ENCODE measurements at regions of chr6 and their contacts with region 1.

Region 1: DNA sequence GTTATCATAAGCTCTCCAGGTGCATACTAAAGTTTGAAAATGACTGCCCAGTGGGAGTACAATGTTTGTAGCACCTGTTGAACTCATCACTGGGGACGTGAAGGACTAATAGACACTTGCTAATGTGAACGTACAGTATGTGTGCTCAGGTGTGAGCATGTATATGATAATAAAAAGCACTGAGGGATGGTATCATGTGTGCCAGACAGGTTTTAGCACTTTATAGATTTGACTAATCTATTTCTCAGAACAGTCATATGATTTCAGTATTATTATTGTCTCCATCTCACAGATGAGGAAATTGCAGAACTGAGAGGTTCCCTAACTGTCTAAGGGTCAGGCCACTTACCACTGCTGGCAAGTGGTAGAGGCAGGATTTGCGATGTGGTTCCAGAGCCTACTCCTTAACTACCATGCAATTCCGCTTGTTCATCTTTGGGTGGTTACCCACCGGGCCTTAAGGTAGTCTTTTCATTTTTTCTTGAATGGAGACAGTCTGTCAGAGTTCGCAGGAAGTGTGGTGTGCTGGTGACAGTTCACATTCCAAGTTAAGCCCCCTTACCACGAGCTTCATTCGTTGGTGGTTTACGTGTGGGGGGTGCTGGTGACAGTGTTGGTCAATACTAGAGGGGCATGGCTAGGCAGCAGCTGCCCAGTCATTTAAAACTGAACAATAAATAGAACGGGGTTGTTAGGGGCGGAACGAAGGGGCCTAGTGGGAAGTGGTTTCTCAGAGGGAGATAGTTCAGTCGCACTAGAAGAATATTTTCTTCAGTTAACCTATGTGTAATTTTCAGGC is 46.8 kb downstream of the RREB1 start:
- H3K4me3 Mint-ChIP-seq: peak overlapping the region; percentile 17
- H3K27ac Mint-ChIP-seq: peak overlapping the region; percentile 90
- H3K4me1 Mint-ChIP-seq: peaks cover 90% of the 10 kb centered on the region
- H3K27me3 Mint-ChIP-seq: no peaks in the 10 kb centered on the region

Region 2: GRCh38 chr6:7112741-7113313 is 41.7 kb before region 1 on chr6:
- intact Hi-C with region 1: loop called (anchors 5 kb)
- H3K4me3 Mint-ChIP-seq: peak overlapping the region; percentile 67
- H3K27ac Mint-ChIP-seq: peak overlapping the region; percentile 62
- H3K4me1 Mint-ChIP-seq: peaks cover 61% of the 10 kb centered on the region
- H3K27me3 Mint-ChIP-seq: no peaks in the 10 kb centered on the region

Region 3: DNA sequence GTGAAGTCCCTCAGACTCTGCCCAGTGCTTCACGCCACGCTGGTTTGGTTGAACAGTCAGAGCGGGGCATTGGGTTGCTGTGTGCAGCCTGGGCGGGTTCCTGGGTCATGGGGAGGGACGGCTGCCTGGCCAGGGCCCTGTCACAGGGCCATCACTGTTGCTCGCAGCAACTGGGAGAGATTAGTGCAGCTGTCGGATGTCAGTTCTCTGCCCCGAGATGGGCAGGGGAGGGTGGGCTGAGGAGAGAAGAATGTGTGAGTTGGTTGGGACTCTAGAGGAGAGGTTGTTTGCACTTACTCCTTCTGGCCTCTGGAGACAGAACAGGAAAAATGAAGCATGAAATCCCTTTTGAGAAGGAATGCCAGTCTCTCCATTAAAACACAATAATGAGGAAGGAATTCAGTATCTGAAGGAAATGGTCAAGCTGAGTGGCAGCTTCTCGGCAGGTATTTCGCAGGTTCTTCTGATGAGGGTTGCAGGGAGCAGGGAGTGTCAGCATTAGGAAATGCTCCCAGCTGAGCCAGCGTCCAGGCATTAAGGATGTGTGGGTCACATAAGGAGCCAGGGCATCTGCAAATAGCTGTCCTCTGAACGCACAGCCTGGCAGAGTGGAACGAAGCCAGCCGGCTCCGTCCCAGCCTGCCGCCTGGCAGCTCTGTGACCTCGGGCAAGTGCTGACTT is 62.5 kb after region 1 on chr6:
- intact Hi-C with region 1: no loop called
- H3K4me3 Mint-ChIP-seq: no peak overlapping the region
- H3K27ac Mint-ChIP-seq: peak overlapping the region; percentile 75
- H3K4me1 Mint-ChIP-seq: peaks cover 44% of the 10 kb centered on the region
- H3K27me3 Mint-ChIP-seq: no peaks in the 10 kb centered on the region

Measured in dendritic cell treated with granulocyte-macrophage colony-stimulating factor and Interleukin-4, amounts not matched to agents 40 ng/mL and 50 ng/mL, for 4 days (primary cell).